ENCODE measurements at regions of chr6 and their contacts with region 1.

Region 1: DNA sequence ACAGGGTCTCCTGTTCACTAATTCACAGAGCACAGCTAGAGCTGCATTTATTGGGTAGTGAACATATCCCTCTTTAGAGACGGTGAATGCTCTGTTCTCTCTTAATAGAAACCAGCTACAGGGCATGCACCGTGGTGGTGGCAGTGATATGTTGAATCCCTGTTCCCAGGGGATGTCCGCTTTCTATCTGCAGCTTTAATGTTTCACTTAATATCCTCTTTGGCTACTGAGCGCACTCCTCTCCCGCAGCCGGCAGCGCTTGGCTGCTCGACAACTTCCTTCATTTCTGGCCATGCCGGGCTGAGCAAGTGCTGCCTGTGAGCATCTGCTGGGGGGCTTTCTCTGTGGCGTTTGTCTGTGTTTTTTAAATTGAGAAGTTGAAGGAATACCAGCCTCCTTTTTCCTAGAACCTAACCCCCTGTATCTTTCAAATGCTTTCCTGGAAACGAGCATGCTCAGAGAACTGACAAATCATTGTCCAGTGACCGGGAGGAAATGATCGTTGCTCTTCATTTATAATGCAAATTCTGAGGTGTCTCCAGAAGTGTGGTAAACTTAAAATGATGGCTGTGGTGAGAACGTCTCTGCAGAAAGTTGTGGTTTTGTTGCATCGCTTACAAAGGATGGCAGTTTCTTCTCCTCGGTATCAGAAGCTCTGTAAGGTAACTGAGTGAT is 297.9 kb downstream of the UTRN start:
- DNase-seq: no peak
- H3K4me3 ChIP-seq: peak overlapping the region; percentile 48
- H3K27ac ChIP-seq: no peak overlapping the region
- H3K27me3 ChIP-seq: no peaks in the 10 kb centered on the region
- CTCF ChIP-seq: no peak

Region 2: DNA sequence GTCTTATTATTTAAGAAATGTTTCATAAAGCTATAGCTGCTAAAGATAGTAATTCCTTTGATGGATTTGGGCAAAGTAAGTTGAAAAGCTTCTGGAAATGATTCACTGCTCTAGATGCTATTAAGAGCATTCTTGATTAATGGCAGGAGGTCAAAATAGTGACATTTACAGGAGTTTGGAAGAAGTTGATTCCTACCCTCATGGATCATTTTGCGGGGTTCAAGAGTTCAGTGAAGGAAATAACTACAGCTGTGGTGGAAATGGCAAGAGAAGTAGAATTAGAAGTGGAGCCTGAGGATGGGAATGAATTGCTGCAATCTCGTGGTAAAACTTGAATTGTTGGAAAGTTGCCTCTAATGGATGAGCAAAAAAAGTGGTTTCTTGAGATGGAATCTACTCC is 18.1 kb after region 1 on chr6:
- CTCF ChIA-PET with region 1: interaction called, 10 read pairs
- POLR2A ChIA-PET with region 1: no interaction called
- DNase-seq: no peak
- H3K4me3 ChIP-seq: no peak overlapping the region
- H3K27ac ChIP-seq: no peak overlapping the region
- H3K27me3 ChIP-seq: no peaks in the 10 kb centered on the region
- CTCF ChIP-seq: no peak

Region 3: DNA sequence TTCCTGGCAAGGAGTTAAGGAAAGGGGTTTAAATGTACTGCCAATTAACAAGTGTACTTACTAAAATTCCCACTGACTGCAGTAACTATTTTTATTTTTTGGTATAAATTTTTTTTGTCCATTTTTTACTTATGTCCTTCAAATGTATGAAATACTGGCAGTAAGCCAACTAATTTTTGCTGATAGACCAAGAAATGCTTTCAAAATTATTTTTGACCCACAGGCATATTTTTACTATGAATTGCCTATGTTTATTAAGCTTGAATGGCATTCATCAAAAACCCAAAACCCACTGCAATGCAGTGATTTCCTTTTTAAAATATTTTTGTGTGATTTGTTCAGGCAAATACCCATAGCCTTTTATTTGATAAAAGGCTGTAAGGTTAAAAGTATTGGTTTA is 262.1 kb after region 1 on chr6:
- CTCF ChIA-PET with region 1: interaction called, 13 read pairs
- POLR2A ChIA-PET with region 1: no interaction called
- DNase-seq: no peak
- H3K4me3 ChIP-seq: no peak overlapping the region
- H3K27ac ChIP-seq: no peak overlapping the region
- H3K27me3 ChIP-seq: no peaks in the 10 kb centered on the region
- CTCF ChIP-seq: no peak

Region 4: GRCh38 chr6:144931172-144932035 is 348.3 kb after region 1 on chr6:
- CTCF ChIA-PET with region 1: interaction called, 47 read pairs
- POLR2A ChIA-PET with region 1: no interaction called
- DNase-seq: no peak
- H3K4me3 ChIP-seq: no peak overlapping the region
- H3K27ac ChIP-seq: no peak overlapping the region
- H3K27me3 ChIP-seq: no peaks in the 10 kb centered on the region
- CTCF ChIP-seq: peak; percentile 80

Region 5: GRCh38 chr6:145141572-145141971 is 558.5 kb after region 1 on chr6:
- CTCF ChIA-PET with region 1: interaction called, 10 read pairs
- POLR2A ChIA-PET with region 1: no interaction called
- DNase-seq: no peak
- H3K4me3 ChIP-seq: no peak overlapping the region
- H3K27ac ChIP-seq: no peak overlapping the region
- H3K27me3 ChIP-seq: no peaks in the 10 kb centered on the region
- CTCF ChIP-seq: no peak

Region 6: GRCh38 chr6:145214570-145214969 is 631.5 kb after region 1 on chr6:
- CTCF ChIA-PET with region 1: interaction called, 43 read pairs
- POLR2A ChIA-PET with region 1: no interaction called
- DNase-seq: no peak
- H3K4me3 ChIP-seq: no peak overlapping the region
- H3K27ac ChIP-seq: no peak overlapping the region
- H3K27me3 ChIP-seq: no peaks in the 10 kb centered on the region
- CTCF ChIP-seq: peak; percentile 59

Region 7: DNA sequence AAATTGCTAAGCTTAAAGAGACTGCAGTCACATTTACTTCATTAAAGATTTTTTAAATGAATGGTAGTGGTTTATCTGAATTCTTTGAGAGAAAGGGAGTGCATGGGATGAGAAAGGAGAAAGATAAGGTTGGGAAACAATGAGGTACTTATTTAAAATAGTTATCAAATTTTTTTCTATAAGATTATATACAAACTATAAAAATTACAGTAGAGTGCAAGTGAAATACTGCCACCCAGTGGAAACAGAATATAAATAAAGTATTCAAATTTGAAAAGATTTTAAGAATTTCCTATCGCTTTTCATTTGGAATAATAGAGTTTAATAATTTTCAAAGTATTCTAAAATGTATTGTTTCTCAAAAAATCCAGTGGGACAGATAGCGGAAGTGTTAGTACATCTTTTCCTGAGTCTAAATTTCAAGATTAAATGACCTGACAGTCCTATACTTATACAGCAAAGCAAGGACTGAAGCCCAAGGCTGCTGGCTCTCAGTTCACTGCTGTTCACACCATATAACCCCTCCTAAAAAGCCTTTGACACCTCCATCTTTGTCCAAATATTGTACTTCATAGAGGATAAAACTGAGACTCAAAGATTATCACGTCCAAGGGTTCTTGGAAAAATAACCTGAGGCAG is 1121.2 kb after region 1 on chr6:
- CTCF ChIA-PET with region 1: interaction called, 14 read pairs
- POLR2A ChIA-PET with region 1: no interaction called
- DNase-seq: no peak
- H3K4me3 ChIP-seq: no peak overlapping the region
- H3K27ac ChIP-seq: no peak overlapping the region
- H3K27me3 ChIP-seq: no peaks in the 10 kb centered on the region
- CTCF ChIP-seq: peak; percentile 55

Measured in AG04450 (cell line).